ENCODE measurements at regions of chr6 and their contacts with region 1.

Region 1: DNA sequence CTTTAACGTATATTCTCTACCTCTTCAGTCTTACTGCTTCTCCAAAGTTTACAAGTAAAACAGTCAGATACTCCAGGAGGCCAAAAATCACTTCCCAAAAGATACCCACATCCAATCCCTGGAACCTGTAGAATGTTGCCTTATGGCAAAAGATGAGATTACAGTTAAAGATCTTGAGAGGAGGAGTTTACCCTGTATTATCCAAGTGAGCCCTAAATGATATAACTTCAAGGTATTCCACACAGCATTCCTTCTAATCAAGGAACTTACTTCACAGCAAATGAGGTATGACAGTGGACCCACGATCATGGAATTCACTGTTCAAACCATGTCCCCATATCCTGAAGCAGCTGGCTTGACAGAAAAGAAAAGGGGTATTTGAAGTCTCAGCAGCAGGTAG is 79.7 kb downstream of the PDE10A start:
- DNase-seq: no peak
- ATAC-seq: no peak
- H3K4me3 ChIP-seq: no peak overlapping the region
- H3K27ac ChIP-seq: no peak overlapping the region
- H3K4me1 ChIP-seq: no peaks in the 10 kb centered on the region
- H3K27me3 ChIP-seq: no peaks in the 10 kb centered on the region
- CTCF ChIP-seq: no peak
- POLR2A ChIP-seq: no peak
- RAD21 ChIP-seq: no peak

Region 2: GRCh38 chr6:165548450-165548849 is 34.8 kb before region 1 on chr6:
- CTCF ChIA-PET with region 1: no interaction called
- POLR2A ChIA-PET with region 1: no interaction called
- RAD21 ChIA-PET with region 1: no interaction called
- intact Hi-C with region 1: loop called (anchors 1 kb)
- DNase-seq: no peak
- ATAC-seq: no peak
- H3K4me3 ChIP-seq: no peak overlapping the region
- H3K27ac ChIP-seq: no peak overlapping the region
- H3K4me1 ChIP-seq: no peaks in the 10 kb centered on the region
- H3K27me3 ChIP-seq: no peaks in the 10 kb centered on the region
- CTCF ChIP-seq: no peak
- POLR2A ChIP-seq: no peak
- RAD21 ChIP-seq: no peak

Measured in HCT116 (cell line).